Activated CD4-positive, alpha-beta T cell treated with anti-CD3 and anti-CD28 coated beads for 36 hours (primary cell): ENCODE measurements at regions of chr3 and their contacts with region 1.

Region 1: GRCh38 chr3:108477511-108478147 is 32.8 kb downstream of the MYH15 start:
- DNase-seq: peak; percentile 78
- ATAC-seq: peak; percentile 79
- H3K4me3 Mint-ChIP-seq: no peak overlapping the region
- H3K27ac Mint-ChIP-seq: no peak overlapping the region
- H3K4me1 Mint-ChIP-seq: no peaks in the 10 kb centered on the region
- H3K27me3 Mint-ChIP-seq: peaks cover 2% of the 10 kb centered on the region

Region 2: GRCh38 chr3:108053067-108053466 is 424.6 kb before region 1 on chr3:
- CTCF ChIA-PET with region 1: no interaction called
- POLR2A ChIA-PET with region 1: no interaction called
- intact Hi-C with region 1: no loop called
- DNase-seq: no peak
- ATAC-seq: no peak
- H3K4me3 Mint-ChIP-seq: no peak overlapping the region
- H3K27ac Mint-ChIP-seq: peak overlapping the region; percentile 35
- H3K4me1 Mint-ChIP-seq: peaks cover 40% of the 10 kb centered on the region
- H3K27me3 Mint-ChIP-seq: no peaks in the 10 kb centered on the region

Region 3: GRCh38 chr3:108459225-108459624 is 18.4 kb before region 1 on chr3:
- CTCF ChIA-PET with region 1: interaction called, 14 read pairs
- POLR2A ChIA-PET with region 1: no interaction called
- intact Hi-C with region 1: no loop called
- DNase-seq: no peak
- ATAC-seq: no peak
- H3K4me3 Mint-ChIP-seq: no peak overlapping the region
- H3K27ac Mint-ChIP-seq: no peak overlapping the region
- H3K4me1 Mint-ChIP-seq: no peaks in the 10 kb centered on the region
- H3K27me3 Mint-ChIP-seq: no peaks in the 10 kb centered on the region

Region 4: DNA sequence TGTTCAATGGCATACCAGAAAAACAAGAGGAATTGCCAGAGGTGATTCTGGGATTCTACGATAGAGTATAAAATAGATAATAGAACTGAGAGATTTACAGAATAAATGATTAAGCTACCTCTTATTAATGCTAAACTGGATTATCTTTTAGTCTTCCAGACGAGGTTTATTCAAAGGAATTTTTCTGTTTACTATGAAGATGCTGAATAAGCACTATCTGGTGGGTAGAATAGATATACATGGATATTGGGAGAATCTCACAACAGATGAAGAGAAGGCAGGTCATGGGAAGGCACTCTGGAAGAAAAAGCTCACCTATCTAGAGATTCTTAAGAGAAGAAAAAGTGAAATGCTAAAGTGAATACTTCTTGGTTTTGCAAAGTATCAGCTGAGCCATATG is 100.4 kb after region 1 on chr3:
- CTCF ChIA-PET with region 1: no interaction called
- POLR2A ChIA-PET with region 1: no interaction called
- intact Hi-C with region 1: no loop called
- DNase-seq: no peak
- ATAC-seq: no peak
- H3K4me3 Mint-ChIP-seq: no peak overlapping the region
- H3K27ac Mint-ChIP-seq: no peak overlapping the region
- H3K4me1 Mint-ChIP-seq: peaks cover 6% of the 10 kb centered on the region
- H3K27me3 Mint-ChIP-seq: no peaks in the 10 kb centered on the region